AG04450 (cell line): ENCODE measurements at regions of chr10 and their contacts with region 1.

Region 1: DNA sequence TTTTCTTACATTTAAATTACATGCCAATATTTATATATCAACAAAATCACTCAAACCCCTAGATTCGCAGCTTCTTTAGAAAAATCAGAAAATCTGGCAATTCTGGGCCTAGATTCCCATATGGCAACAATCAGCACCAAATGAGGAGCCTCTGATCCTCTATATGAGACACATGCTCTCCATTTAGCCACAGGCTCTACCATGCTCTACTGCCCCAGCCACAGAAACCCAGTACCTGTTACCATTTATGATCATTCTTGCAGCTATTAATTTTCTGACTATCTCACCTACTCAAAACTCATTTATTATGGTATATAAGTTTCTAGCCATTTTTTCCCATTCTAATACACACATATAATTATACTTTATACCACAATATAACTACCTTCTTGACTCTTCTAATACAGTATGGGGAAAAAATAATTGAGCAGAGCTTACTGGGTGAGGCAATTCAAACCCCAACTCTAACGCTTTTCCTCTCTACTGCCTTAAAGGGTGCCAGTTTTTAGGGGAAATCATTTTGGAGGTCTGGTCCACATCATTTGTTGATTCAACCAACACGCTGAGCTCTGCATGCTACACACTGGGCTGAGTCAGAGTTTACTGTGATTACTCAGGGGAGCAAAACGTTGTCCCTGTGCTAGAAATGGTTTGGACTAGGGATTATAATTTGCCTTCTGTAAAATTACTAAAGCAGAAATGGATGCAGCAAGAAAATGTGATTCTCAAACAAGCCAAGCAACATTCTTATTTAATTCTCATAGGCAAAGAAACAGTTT is 11.6 kb downstream of the PDLIM1 start:
- DNase-seq: no peak
- H3K4me3 ChIP-seq: no peak overlapping the region
- H3K27ac ChIP-seq: peak overlapping the region; percentile 77
- H3K27me3 ChIP-seq: no peaks in the 10 kb centered on the region
- CTCF ChIP-seq: no peak

Region 2: DNA sequence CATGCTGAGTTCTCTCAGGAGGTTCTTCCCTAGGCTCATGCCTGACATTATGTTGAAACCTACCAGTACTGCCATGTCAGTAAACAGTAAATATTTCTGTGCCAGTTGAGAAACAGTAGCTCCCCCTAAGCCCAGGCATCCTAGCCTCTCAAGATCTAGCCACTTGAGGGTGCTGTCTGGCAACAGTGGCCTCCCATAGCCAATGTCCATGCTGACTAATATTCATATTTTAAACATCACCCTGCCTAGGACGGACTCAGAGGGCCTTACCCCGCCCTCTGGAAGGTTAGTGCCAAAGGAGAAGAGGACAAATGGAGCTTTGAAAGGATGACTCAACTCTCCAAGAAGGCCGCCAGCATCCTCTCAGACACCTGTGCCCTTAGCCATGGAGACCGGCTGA is 77.5 kb before region 1 on chr10:
- CTCF ChIA-PET with region 1: interaction called, 11 read pairs
- POLR2A ChIA-PET with region 1: no interaction called
- DNase-seq: no peak
- H3K4me3 ChIP-seq: no peak overlapping the region
- H3K27ac ChIP-seq: no peak overlapping the region
- H3K27me3 ChIP-seq: no peaks in the 10 kb centered on the region
- CTCF ChIP-seq: peak; percentile 55